Activated naive CD4-positive, alpha-beta T cell treated with anti-CD3 and anti-CD28 coated beads, Interleukin-2, amount 10 ng/mL, durations not matched to agents 7 days and 5 days (primary cell): ENCODE measurements at regions of chr17 and their contacts with region 1.

Region 1: GRCh38 chr17:73710095-73710592 is 65.9 kb upstream of the SDK2 start:
- DNase-seq: peak; percentile 80
- H3K4me3 Mint-ChIP-seq: no peak overlapping the region
- H3K27ac Mint-ChIP-seq: no peak overlapping the region
- H3K4me1 Mint-ChIP-seq: peaks cover 15% of the 10 kb centered on the region
- H3K27me3 Mint-ChIP-seq: peaks cover 51% of the 10 kb centered on the region

Region 2: GRCh38 chr17:73429440-73430164 is 280.5 kb before region 1 on chr17:
- CTCF ChIA-PET with region 1: interaction called, 61 read pairs
- DNase-seq: peak; percentile 91
- H3K4me3 Mint-ChIP-seq: no peak overlapping the region
- H3K27ac Mint-ChIP-seq: no peak overlapping the region
- H3K4me1 Mint-ChIP-seq: peaks cover 19% of the 10 kb centered on the region
- H3K27me3 Mint-ChIP-seq: peaks cover 6% of the 10 kb centered on the region

Region 3: DNA sequence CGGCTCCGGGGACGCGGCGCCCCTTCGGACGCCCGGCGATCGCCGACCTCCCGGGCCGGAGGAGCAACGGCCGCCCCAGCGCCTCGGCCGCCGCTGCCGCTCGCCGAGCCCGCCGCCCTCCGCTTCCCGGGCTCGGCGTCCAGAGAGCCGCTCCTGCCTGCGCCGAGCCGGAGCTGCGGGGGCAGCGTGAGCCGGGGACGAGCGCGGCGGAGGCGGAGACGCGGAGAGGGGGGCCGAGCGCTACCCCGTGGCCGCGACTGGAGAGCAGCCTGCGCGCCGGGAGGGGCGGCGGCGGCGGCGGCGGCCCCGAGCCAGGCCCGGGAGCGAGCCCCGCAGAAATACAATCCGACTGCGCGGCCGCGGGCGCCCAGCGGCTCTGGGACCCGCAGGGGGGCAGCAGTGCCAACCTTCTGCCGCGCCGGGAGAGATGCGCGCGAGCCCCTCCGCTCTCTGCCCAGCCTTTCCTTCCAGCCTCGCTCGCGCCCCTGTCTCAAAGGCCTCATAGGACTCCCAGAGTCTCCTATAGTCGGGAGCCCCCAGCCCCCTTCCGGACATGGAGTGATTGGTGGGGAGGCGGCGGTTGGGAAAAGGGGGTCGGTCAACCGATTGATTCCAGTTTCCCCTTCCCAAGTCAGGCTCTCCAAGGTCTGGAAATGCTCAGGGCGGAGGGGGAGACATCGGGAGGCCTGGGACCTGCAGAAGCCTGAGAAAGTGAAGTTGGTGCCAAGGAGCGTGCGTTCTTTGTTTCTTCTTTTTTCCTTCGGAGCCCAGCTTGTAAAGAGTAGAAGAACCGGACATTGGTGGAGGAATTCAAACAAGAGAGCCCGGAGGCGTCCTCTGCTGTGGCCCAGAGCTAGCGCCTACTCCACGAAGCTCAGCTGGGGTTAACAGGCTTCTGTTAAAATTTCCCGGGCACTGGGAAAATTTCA is 64.8 kb before region 1 on chr17:
- CTCF ChIA-PET with region 1: interaction called, 25 read pairs
- DNase-seq: peak; percentile 64
- H3K4me3 Mint-ChIP-seq: peak overlapping the region; percentile 65
- H3K27ac Mint-ChIP-seq: no peak overlapping the region
- H3K4me1 Mint-ChIP-seq: peaks cover 28% of the 10 kb centered on the region
- H3K27me3 Mint-ChIP-seq: peaks cover 92% of the 10 kb centered on the region

Region 4: DNA sequence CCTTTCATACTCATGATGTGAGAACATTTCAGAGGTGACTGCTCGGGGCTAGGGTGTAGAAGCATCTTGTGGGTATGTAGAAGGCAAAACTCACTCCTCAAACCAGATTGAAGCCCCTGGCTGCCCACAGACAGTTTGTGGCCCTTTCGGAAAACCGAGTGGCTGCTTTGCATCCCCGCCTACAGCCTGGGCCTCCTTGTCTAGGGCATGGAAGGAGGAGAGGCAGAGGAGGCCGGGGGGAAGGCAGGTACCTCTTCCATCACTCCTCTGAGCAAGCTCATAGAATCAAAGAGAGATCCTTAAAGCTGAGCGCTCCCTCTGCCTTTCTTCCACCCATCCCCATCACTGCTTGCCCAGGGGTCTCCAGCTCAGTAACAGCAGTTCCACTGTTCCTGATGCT is 54.2 kb before region 1 on chr17:
- CTCF ChIA-PET with region 1: interaction called, 25 read pairs
- DNase-seq: no peak
- H3K4me3 Mint-ChIP-seq: no peak overlapping the region
- H3K27ac Mint-ChIP-seq: no peak overlapping the region
- H3K4me1 Mint-ChIP-seq: peaks cover 5% of the 10 kb centered on the region
- H3K27me3 Mint-ChIP-seq: peaks cover 41% of the 10 kb centered on the region

Region 5: GRCh38 chr17:73759734-73760438 is 49.7 kb after region 1 on chr17:
- CTCF ChIA-PET with region 1: no interaction called
- DNase-seq: no peak
- H3K4me3 Mint-ChIP-seq: no peak overlapping the region
- H3K27ac Mint-ChIP-seq: no peak overlapping the region
- H3K4me1 Mint-ChIP-seq: peaks cover 9% of the 10 kb centered on the region
- H3K27me3 Mint-ChIP-seq: peaks cover 16% of the 10 kb centered on the region